WTC11 (cell line): ENCODE measurements at regions of chr11 and their contacts with region 1.

Region 1: GRCh38 chr11:46504817-46505613 is 88.8 kb downstream of the AMBRA1 start:
- DNase-seq: no peak
- ATAC-seq: no peak
- H3K4me3 Mint-ChIP-seq: no peak overlapping the region
- H3K27ac Mint-ChIP-seq: no peak overlapping the region; the same call in 1 of the 2 replicates
- H3K4me1 Mint-ChIP-seq: peaks cover 20% of the 10 kb centered on the region
- H3K27me3 Mint-ChIP-seq: no peaks in the 10 kb centered on the region
- CTCF ChIP-seq: no peak

Region 2: DNA sequence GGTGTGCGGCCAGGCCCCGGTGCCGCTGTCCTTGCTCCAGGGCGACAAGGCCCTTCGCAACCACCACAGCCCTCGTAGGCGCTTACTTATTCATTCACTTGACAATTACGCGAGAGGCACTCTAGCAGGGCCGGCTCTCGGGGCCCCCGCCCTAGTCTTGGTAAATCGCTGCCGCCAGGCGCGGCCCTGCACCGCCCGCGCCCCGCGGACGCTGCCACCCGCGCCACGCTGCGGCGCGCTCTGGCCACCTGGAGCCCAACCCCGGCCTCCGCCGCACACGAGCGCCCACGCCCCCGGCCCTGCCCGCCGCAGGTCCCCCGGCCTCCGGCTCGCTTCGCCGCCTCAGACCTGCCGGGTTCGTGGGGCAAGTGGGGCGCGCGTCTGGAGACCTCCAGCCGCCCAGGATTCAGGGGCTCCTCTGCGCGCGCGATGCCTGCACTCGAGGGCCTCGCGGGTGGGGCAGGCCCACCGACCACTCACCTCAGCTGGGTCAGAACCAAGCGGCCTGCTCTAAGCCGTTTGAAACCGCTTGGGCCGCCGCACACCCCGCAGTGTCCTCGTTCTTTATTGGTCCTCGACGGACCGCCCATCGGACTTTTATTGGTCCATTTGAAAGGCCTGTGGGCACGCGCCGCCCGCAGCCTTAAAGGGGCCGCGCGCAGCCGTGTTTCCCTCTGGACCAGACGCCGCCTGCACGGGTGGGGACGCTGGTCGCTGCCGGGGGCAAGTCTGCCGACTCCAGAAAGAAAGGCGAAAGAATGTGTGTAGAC is 340.9 kb after region 1 on chr11 and contains the start of gene CKAP5:
- CTCF ChIA-PET with region 1: no interaction called
- POLR2A ChIA-PET with region 1: no interaction called
- DNase-seq: peak; percentile 88
- ATAC-seq: peak; percentile 90
- H3K4me3 Mint-ChIP-seq: peak within 1 kb of the TSS; percentile 92
- H3K27ac Mint-ChIP-seq: peak within 1 kb of the TSS; percentile 61
- H3K4me1 Mint-ChIP-seq: peaks cover 40% of the 10 kb centered on the region
- H3K27me3 Mint-ChIP-seq: peaks cover 22% of the 10 kb centered on the region
- CTCF ChIP-seq: no peak
- total RNA-seq, gene CKAP5: 168 to 174 TPM (median 171 TPM) in 3 replicates

Region 3: GRCh38 chr11:47715082-47715669 is 1210.2 kb after region 1 on chr11 and contains the start of gene AGBL2:
- CTCF ChIA-PET with region 1: no interaction called
- POLR2A ChIA-PET with region 1: interaction called, 14 read pairs
- DNase-seq: peak; percentile 83
- ATAC-seq: peak; percentile 97
- H3K4me3 Mint-ChIP-seq: peak within 1 kb of the TSS; percentile 94
- H3K27ac Mint-ChIP-seq: peak within 1 kb of the TSS; percentile 90
- H3K4me1 Mint-ChIP-seq: peaks cover 20% of the 10 kb centered on the region
- H3K27me3 Mint-ChIP-seq: no peaks in the 10 kb centered on the region
- CTCF ChIP-seq: no peak
- total RNA-seq, gene AGBL2: 3.7 to 4.2 TPM (median 4.1 TPM) in 3 replicates